ENCODE measurements at regions of chr15 and their contacts with region 1.

Region 1: GRCh38 chr15:98311566-98312188 is 336.7 kb upstream of the IGF1R start:
- DNase-seq: peak in 4 of 5 donors; percentile 46 to 73 (median 62)
- ATAC-seq: peak in 1 of 4 donors; percentile 65
- H3K4me3 ChIP-seq: peak overlapping the region in 1 of 12 donors; percentile 31
- H3K27ac ChIP-seq: no peak overlapping the region
- H3K4me1 ChIP-seq: no peaks in the 10 kb centered on the region
- H3K27me3 ChIP-seq: peaks cover 0 to 14% (median 0%) of the 10 kb centered on the region in 9 donors
- CTCF ChIP-seq: peak; percentile 68 to 87 (median 81)
- POLR2A ChIP-seq: no peak

Region 2: DNA sequence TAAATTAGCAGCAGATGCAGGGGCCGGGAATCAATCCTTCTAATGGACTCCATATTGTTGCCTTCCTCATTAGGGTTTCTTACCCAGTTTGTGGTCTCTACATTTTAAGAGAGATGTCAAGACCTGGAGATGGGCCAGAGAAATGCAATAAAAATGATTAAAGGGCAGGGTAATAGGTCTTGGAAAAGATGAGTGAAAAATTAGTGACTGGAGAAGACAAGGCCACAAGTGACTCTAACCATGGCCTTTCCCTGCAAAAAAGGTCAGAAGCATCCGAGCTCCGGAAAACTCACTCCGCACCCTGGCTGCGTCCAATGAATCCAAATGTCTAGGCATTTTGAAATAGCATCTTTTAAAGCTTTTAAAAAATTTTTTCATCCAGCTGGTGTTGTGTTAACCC is 198.3 kb before region 1 on chr15:
- intact Hi-C with region 1: no loop called
- DNase-seq: no peak
- ATAC-seq: no peak
- H3K4me3 ChIP-seq: no peak overlapping the region
- H3K27ac ChIP-seq: no peak overlapping the region
- H3K4me1 ChIP-seq: no peaks in the 10 kb centered on the region
- H3K27me3 ChIP-seq: peaks cover 0 to 15% (median 0%) of the 10 kb centered on the region in 9 donors
- CTCF ChIP-seq: no peak
- POLR2A ChIP-seq: no peak

Region 3: DNA sequence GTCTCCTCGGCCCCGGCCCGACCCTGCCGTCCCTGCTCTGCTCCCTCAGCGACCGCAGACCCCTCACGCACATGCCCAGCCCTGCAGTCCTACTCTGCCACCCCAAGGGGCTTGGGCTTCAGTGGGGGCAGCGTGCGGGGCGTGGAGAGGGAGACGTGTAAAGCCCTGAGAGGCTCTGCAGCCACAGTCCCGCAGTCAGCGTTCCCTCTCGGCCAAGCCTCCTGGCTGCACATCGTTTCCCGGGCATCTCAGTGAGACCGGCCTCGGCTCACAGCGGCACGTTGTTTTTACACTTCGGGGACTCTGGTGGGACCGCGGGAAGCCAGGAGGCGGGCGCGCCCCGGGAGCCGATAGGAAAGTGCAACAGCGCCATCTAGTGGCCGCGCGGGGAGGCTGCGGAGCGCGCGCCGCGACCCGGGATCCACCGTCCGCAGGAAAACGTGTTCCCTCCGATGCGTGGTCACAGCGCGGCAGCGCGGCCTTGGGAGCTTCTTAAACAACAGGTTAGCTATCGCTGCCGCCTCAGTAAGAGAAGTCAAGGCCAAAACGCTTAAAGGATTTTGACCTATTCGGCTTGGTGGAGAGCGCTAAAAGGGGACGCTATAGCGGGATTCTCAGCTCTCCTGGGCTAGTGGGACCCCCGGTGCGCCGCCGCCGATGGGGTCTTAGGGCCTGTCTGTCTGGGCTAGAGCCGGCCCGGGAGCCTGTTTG is 109.9 kb after region 1 on chr15:
- intact Hi-C with region 1: loop called (anchors 1 to 5 kb)
- DNase-seq: peak; percentile 58 to 82 (median 65)
- ATAC-seq: peak; percentile 67 to 92 (median 84)
- H3K4me3 ChIP-seq: peak overlapping the region in 10 of 12 donors; percentile 9 to 44 (median 29)
- H3K27ac ChIP-seq: no peak overlapping the region
- H3K4me1 ChIP-seq: peaks cover 0 to 16% (median 10%) of the 10 kb centered on the region in 12 donors
- H3K27me3 ChIP-seq: peaks cover 7 to 60% (median 28%) of the 10 kb centered on the region in 9 donors
- CTCF ChIP-seq: peak; percentile 92 to 100 (median 99)
- POLR2A ChIP-seq: no peak